ENCODE measurements at regions of chr21 and their contacts with region 1.

Region 1: DNA sequence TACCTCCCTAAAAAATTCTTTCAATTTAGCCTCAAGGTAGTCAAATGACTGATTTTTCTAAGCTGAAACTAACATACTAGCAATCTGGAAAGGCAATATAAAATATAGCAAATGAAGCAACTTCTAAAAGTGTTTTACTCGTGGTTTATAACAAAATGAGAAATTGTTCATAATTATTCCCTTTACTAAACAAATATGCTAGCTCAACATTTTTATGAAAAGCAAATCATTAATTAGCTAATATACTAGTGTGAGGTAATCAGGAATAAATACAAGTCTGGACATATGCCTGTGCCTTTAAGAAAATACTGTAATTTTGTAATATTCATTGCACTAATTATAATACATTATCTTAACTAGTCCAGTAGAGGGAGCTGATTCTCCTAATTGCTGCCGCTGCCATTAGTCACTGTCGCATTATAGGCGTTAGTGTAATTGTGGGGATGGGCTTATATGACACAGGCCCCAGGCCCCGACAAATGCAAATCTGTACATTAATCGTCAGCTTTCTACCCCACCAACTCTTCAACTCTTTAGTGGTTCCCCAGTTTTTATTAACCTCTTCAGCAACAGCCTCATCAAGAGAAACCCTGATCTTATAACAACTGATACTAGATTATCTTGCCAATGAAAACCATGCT is 160.9 kb downstream of the GABPA start:
- DNase-seq: no peak
- CTCF ChIP-seq: no peak

Region 2: GRCh38 chr21:26170471-26171257 is 275.0 kb after region 1 on chr21 and contains the start of gene APP:
- in situ Hi-C with region 1: loop called (anchors 10 kb)
- DNase-seq: peak; percentile 96
- CTCF ChIP-seq: peak; percentile 97

Measured in GM13976 (cell line).